Endothelial cell of umbilical vein (primary cell): ENCODE measurements at regions of chr19 and their contacts with region 1.

Region 1: GRCh38 chr19:2820112-2820702 is 539 bp downstream of the ZNF554 start:
- DNase-seq: peak; percentile 8
- H3K4me3 ChIP-seq: peak overlapping the region; percentile 52 to 86 (median 54)
- H3K27ac ChIP-seq: no peak overlapping the region
- H3K4me1 ChIP-seq: peaks cover 3% of the 10 kb centered on the region
- H3K27me3 ChIP-seq: no peaks in the 10 kb centered on the region
- CTCF ChIP-seq: no peak
- POLR2A ChIP-seq: no peak

Region 2: GRCh38 chr19:2782936-2783780 is 37.0 kb before region 1 on chr19 and contains the start of gene SGTA:
- CTCF ChIA-PET with region 1: interaction called, 4 read pairs
- POLR2A ChIA-PET with region 1: no interaction called
- dilution Hi-C with region 1: no loop called
- intact Hi-C with region 1: loop called (anchors 2 kb)
- DNase-seq: peak; percentile 99
- H3K4me3 ChIP-seq: peak within 1 kb of the TSS; percentile 83 to 89 (median 86)
- H3K27ac ChIP-seq: peak within 1 kb of the TSS; percentile 84
- H3K4me1 ChIP-seq: peaks cover 24% of the 10 kb centered on the region
- H3K27me3 ChIP-seq: no peaks in the 10 kb centered on the region
- CTCF ChIP-seq: peak; percentile 21 to 49
- POLR2A ChIP-seq: peak; percentile 84
- total RNA-seq, gene SGTA: 72.3 and 76.5 TPM in 2 replicates